A549 (cell line): ENCODE measurements at regions of chr6 and their contacts with region 1.

Region 1: GRCh38 chr6:25193460-25194171 is 85.6 kb upstream of the CARMIL1 start:
- DNase-seq: peak; percentile 25 to 52
- ATAC-seq: peak in 1 of 2 experiments; percentile 71; a peak in 3 of 6 replicates
- H3K4me3 ChIP-seq: no peak overlapping the region
- H3K27ac ChIP-seq: peak overlapping the region; percentile 68 to 87
- H3K4me1 ChIP-seq: peaks cover 24% of the 10 kb centered on the region
- CTCF ChIP-seq: no peak
- EP300 ChIP-seq: no peak
- POLR2A ChIP-seq: no peak
- RAD21 ChIP-seq: no peak

Region 2: GRCh38 chr6:25173951-25174474 is 19.6 kb before region 1 on chr6:
- CTCF ChIA-PET with region 1: interaction called, 4 read pairs
- POLR2A ChIA-PET with region 1: interaction called, 14 read pairs
- DNase-seq: peak; percentile 23 to 62
- ATAC-seq: peak; percentile 69 to 80; a peak in 5 of 6 replicates
- H3K4me3 ChIP-seq: no peak overlapping the region
- H3K27ac ChIP-seq: peak overlapping the region; percentile 52 to 80
- H3K4me1 ChIP-seq: peaks cover 38% of the 10 kb centered on the region
- CTCF ChIP-seq: no peak
- EP300 ChIP-seq: no peak
- POLR2A ChIP-seq: no peak
- RAD21 ChIP-seq: no peak

Region 3: GRCh38 chr6:25229671-25230321 is 36.2 kb after region 1 on chr6:
- CTCF ChIA-PET with region 1: no interaction called
- POLR2A ChIA-PET with region 1: no interaction called
- DNase-seq: peak in 1 of 2 experiments; percentile 7
- ATAC-seq: no peak
- H3K4me3 ChIP-seq: no peak overlapping the region
- H3K27ac ChIP-seq: peak overlapping the region in 1 of 2 experiments; percentile 12; a peak in 1 of 6 replicates
- H3K4me1 ChIP-seq: peaks cover 6% of the 10 kb centered on the region
- CTCF ChIP-seq: no peak
- EP300 ChIP-seq: no peak
- POLR2A ChIP-seq: no peak
- RAD21 ChIP-seq: no peak